Gastrocnemius medialis (tissue), 4 donors: ENCODE measurements at regions of chr12 and their contacts with region 1.

Region 1: GRCh38 chr12:4421590-4422031 is 24.0 kb downstream of the FGF6 start:
- DNase-seq: no peak
- ATAC-seq: peak; percentile 72 to 75
- H3K4me3 ChIP-seq: no peak overlapping the region
- H3K27ac ChIP-seq: no peak overlapping the region
- H3K4me1 ChIP-seq: no peaks in the 10 kb centered on the region
- H3K27me3 ChIP-seq: peaks cover 11 to 18% (median 18%) of the 10 kb centered on the region in 3 donors
- CTCF ChIP-seq: peak; percentile 38 to 72 (median 60)
- POLR2A ChIP-seq: no peak

Region 2: DNA sequence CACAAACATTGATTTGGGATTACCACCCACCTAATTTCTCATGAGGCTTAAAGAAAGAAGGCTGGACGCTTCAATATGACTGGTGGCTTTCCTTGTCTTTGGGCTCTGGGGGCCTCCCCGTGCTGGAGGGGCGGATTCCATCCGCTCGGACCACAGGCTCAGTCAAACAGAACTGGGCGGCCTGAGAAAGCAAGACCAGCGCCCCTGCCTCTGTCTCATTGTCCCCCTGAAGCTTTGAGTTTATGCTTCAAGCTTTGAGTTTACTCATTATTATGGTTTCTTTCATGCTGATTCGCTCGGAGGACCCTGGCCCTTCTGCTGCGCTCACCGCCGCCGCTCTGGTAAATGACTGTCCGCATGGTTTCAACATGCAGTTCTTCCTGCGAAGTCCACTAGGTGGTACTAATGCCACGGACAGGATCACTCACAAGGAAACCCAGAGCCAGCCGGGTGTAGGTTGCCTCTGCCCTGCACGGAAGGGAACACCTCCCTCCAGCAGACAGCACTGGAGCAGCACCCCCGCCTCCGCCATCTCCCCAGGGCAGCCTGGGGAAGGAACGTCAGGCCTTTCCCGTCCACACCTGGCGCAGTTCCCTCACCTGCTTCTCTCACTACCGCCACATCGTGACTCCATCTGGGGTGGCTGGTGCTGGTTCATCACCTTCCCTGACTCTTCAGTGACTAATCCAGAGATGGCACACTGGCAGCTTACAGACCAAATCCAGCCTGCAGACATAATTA is 113.8 kb before region 1 on chr12:
- in situ Hi-C with region 1: no loop called
- intact Hi-C with region 1: loop called (anchors 5 kb)
- DNase-seq: peak; percentile 38 to 62
- ATAC-seq: peak; percentile 95 to 98
- H3K4me3 ChIP-seq: peak overlapping the region in 2 of 4 donors; percentile 24 to 35
- H3K27ac ChIP-seq: no peak overlapping the region
- H3K4me1 ChIP-seq: peaks cover 0 to 9% of the 10 kb centered on the region in 2 donors
- H3K27me3 ChIP-seq: no peaks in the 10 kb centered on the region
- CTCF ChIP-seq: peak; percentile 44 to 84 (median 63)
- POLR2A ChIP-seq: no peak